Left cardiac atrium (tissue), 4 donors: ENCODE measurements at regions of chr4 and their contacts with region 1.

Region 1: DNA sequence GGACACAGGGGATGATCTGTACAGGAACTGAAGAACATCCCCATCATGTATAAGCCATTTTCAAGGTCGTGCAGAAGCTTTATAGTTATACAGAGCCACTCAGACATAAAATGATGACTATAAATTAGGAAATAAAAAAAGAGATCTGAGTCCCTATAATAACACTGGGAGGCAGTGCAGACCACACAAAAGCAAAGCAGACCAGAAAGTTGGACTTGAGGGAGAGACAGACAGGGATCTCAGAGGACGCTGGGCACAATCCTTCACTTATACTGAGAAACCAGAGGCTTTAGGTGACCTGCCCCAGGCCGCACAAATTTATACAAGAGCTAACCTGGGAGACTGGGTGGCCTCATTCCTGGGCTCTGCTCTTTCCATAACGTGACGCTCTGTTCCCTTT is 70.5 kb downstream of the HADH start:
- DNase-seq: no peak
- ATAC-seq: peak; percentile 43 to 72

Region 2: GRCh38 chr4:108512615-108513505 is 452.7 kb after region 1 on chr4:
- intact Hi-C with region 1: loop called in 1 of 2 experiments (anchors 10 kb)
- DNase-seq: peak; percentile 52
- ATAC-seq: peak in 1 of 2 donors; percentile 72

Region 3: DNA sequence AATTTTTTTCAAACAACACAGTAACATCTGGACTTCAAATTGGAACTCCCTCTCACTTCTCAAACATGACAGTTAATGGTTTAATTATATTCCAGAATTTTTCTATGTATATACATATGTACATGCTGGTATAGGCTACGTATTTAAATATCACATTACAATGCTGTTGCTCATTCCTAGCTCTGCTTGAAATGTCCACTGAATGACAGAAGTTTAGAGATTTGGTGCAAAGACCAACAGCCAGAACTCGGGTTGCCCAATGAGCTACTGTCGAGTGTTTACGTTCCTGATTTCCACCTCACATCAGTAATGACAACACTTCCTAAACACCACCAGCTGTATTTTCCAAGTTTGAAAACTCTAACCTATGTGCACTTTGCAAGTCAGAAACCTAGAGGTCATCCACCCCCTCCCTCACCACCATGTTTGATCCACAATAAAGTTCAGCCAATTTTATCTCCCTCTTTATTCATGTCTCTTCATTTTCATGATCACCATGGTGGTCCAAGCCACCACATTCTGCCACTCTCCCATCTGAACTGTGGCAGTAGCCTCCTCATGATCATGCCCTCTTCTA is 510.9 kb after region 1 on chr4:
- intact Hi-C with region 1: loop called (anchors 5 kb)
- DNase-seq: no peak
- ATAC-seq: no peak